ENCODE measurements at regions of chr2 and their contacts with region 1.

Region 1: DNA sequence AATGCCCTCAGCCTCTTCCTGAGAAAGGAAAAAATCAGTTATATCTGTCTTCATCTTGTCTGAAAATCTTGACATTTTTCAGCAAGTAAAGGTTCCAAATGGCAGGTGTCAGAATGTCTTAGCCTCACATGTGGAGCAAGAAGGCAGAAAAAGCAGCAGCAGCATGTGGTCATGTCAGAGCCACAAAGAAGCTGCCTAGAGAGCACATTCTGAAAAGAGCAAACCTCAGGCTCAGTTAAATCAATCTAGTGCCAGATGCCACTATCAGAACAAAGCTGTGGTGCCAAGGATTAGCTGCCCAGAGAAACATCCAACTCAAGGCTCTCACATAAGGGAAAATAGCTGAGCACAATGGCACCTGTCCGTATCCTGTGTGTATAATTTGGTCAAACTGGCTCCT is 105.9 kb downstream of the SRBD1 start:
- DNase-seq: no peak
- H3K4me3 ChIP-seq: no peak overlapping the region
- H3K27ac ChIP-seq: no peak overlapping the region
- H3K4me1 ChIP-seq: no peaks in the 10 kb centered on the region
- H3K27me3 ChIP-seq: no peaks in the 10 kb centered on the region
- CTCF ChIP-seq: no peak

Region 2: GRCh38 chr2:44148999-44149398 is 1356.1 kb before region 1 on chr2:
- CTCF ChIA-PET with region 1: interaction called, 14 read pairs
- dilution Hi-C with region 1: no loop called
- in situ Hi-C with region 1: no loop called
- intact Hi-C with region 1: no loop called
- DNase-seq: no peak
- H3K4me3 ChIP-seq: no peak overlapping the region
- H3K27ac ChIP-seq: no peak overlapping the region
- H3K4me1 ChIP-seq: no peaks in the 10 kb centered on the region
- H3K27me3 ChIP-seq: no peaks in the 10 kb centered on the region
- CTCF ChIP-seq: no peak

Measured in mammary epithelial cell (primary cell).